Transverse colon (tissue), 4 donors: ENCODE measurements at regions of chr12 and their contacts with region 1.

Region 1: DNA sequence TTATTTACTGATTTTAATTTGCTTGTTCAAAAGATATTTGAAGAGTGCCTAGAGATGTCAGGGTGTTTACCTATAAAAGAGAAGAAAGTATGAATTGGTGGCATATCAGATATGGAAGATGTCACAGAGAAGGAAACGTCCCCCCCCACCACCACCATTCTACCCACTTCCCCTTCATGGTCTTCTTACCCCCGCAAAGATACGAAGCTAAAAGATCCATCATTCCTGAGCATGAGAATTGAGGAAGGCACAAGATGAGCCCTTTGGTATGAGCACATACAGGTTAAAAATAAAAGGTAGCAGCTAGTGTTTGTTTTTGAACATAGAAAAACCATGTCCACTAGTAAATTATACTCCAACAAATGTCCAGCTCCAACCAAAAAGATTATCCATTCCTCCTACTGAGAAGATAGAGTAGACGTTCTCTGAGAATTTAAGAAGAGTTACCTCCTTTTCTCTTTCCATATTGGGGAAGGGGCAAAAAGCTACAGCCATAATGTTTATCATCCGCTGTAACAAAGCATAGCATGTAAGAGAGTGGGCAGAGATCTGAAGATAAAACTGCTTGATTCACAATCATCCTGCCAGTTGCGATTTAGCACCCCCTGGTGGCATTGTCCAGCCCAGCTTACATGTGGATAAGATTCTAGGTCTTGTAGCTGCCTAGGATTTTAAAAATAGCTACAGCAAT is 29.1 kb downstream of the NFYB start:
- DNase-seq: peak; percentile 86
- H3K4me3 ChIP-seq: no peak overlapping the region
- H3K27ac ChIP-seq: no peak overlapping the region
- H3K4me1 ChIP-seq: peaks cover 0 to 5% (median 0%) of the 10 kb centered on the region in 4 donors
- H3K27me3 ChIP-seq: no peaks in the 10 kb centered on the region
- CTCF ChIP-seq: peak; percentile 73 to 89 (median 83)
- EP300 ChIP-seq: no peak
- POLR2A ChIP-seq: no peak

Region 2: DNA sequence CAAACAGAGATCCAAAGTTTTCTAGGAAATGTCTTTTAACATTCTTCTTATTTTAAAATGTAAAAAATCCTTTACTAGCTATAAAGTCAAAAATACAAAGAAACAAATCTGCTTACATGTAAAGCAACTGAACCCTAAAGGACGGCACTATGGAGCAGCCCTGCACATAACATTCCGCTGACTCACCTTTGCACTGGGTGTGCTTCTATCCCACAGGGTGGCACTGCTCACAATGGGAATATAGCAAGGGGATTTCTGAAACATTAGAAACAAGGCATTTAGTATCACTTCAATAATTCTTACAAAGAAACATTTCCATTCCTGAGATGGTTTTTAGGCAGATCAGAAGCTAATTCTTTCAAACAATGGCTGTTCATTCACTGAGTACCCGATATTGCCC is 707.5 kb before region 1 on chr12:
- in situ Hi-C with region 1: no loop called
- intact Hi-C with region 1: no loop called
- DNase-seq: no peak
- H3K4me3 ChIP-seq: no peak overlapping the region
- H3K27ac ChIP-seq: no peak overlapping the region
- H3K4me1 ChIP-seq: no peaks in the 10 kb centered on the region
- H3K27me3 ChIP-seq: no peaks in the 10 kb centered on the region
- CTCF ChIP-seq: no peak
- EP300 ChIP-seq: no peak
- POLR2A ChIP-seq: no peak

Region 3: GRCh38 chr12:103884316-103884715 is 224.6 kb before region 1 on chr12:
- in situ Hi-C with region 1: loop called in 2 of 4 experiments (anchors 5 to 10 kb)
- intact Hi-C with region 1: no loop called
- DNase-seq: peak; percentile 24
- H3K4me3 ChIP-seq: no peak overlapping the region
- H3K27ac ChIP-seq: no peak overlapping the region
- H3K4me1 ChIP-seq: no peaks in the 10 kb centered on the region
- H3K27me3 ChIP-seq: no peaks in the 10 kb centered on the region
- CTCF ChIP-seq: peak in 1 of 5 experiments; percentile 20
- EP300 ChIP-seq: no peak
- POLR2A ChIP-seq: no peak

Region 4: GRCh38 chr12:103930034-103930786 is 178.7 kb before region 1 on chr12 and contains the start of gene HSP90B1:
- in situ Hi-C with region 1: loop called in 1 of 4 experiments (anchors 25 kb)
- intact Hi-C with region 1: no loop called
- DNase-seq: peak; percentile 100
- H3K4me3 ChIP-seq: peak within 1 kb of the TSS; percentile 63 to 90 (median 71)
- H3K27ac ChIP-seq: peak within 1 kb of the TSS; percentile 88 to 96 (median 93)
- H3K4me1 ChIP-seq: peaks cover 21 to 53% (median 32%) of the 10 kb centered on the region in 4 donors
- H3K27me3 ChIP-seq: no peaks in the 10 kb centered on the region
- CTCF ChIP-seq: no peak
- EP300 ChIP-seq: no peak
- POLR2A ChIP-seq: peak; percentile 86
- total RNA-seq, gene HSP90B1: 171 to 346 (median 211) TPM